Activated T-helper 1 cell treated with anti-CD3 and anti-CD28 coated beads, Interleukin-12 subunit alpha, Interleukin-12 subunit beta, Interleukin-2, Interleukin-4 antibody, amounts not matched to agents 30 ng/mL and 10 ng/mL and 1 ng/mL, durations not matched to agents 14 hours and 24 hours and 36 hours (primary cell): ENCODE measurements at regions of chr1 and their contacts with region 1.

Region 1: DNA sequence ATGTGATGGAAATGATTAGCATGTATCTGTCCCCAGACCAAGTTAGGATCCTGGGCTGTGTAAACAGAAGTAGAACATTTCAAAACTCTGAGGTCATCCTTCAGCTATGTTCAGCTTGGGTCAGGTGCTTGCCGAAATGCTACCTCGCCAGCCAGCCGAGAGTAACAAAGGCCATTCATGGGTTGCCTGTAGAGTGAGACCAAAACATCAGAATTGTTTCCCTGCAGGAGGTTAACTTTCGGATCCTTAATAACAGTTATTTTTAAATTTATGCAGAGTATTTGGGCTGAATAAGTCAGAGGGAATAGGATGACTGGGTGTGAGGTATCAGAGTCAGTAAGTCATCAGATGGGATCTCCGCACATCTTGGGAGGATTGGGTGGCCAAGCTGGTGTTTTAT is 35.6 kb downstream of the SMYD2 start:
- DNase-seq: no peak
- H3K4me3 Mint-ChIP-seq: no peak overlapping the region
- H3K27ac Mint-ChIP-seq: no peak overlapping the region
- H3K4me1 Mint-ChIP-seq: peaks cover 7% of the 10 kb centered on the region
- H3K27me3 Mint-ChIP-seq: no peaks in the 10 kb centered on the region

Region 2: GRCh38 chr1:214289574-214290272 is 26.9 kb before region 1 on chr1:
- intact Hi-C with region 1: loop called (anchors 2 kb)
- DNase-seq: no peak
- H3K4me3 Mint-ChIP-seq: no peak overlapping the region
- H3K27ac Mint-ChIP-seq: no peak overlapping the region
- H3K4me1 Mint-ChIP-seq: peaks cover 6% of the 10 kb centered on the region
- H3K27me3 Mint-ChIP-seq: peaks cover 3% of the 10 kb centered on the region